Activated CD4-positive, alpha-beta T cell treated with anti-CD3 and anti-CD28 coated beads for 36 hours (primary cell): ENCODE measurements at regions of chr20 and their contacts with region 1.

Region 1: DNA sequence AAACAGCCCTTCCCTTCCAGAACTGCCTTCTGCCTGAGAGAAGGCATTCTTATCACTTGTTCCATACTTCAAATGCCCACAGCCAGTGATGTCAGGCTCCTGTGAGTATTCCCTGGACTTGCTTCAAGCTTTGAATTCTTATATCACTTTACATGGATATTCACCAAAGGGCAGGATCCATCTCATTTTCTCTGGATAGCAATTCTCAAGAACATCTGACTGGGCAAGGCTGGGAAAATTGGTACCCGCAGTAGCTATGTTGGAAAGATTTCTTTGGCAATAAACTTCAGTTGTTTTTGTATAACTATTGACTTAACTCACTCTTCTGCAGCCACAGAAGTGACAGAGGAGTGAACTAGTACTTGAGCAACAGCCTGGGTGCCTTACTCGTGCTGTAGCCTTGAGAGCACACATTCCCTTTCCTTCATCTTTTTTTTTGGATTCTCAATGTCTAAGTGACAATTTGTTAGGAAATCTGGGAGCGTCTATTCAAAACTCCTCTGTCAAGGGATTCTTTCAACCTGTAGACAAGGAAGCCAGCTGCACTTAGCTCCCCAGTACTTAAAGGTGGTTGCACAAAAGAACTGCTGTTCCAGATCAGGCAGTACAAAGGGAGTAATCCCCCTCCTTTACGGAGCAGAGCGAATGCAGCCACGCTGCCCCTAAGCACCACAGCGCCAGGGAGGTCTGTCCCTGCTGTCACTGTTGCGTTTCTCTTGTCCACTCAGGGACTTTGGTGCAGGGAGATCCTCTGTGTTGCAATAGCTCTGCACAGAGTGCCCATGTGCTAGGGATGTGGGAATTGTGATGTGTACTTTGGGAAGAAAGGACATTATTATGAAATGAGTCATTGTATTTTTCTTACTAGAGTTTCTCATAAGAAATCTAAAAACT is 69.6 kb downstream of the JAG1 start:
- DNase-seq: no peak
- ATAC-seq: no peak
- H3K4me3 Mint-ChIP-seq: no peak overlapping the region
- H3K27ac Mint-ChIP-seq: no peak overlapping the region
- H3K4me1 Mint-ChIP-seq: peaks cover 9% of the 10 kb centered on the region
- H3K27me3 Mint-ChIP-seq: no peaks in the 10 kb centered on the region

Region 2: DNA sequence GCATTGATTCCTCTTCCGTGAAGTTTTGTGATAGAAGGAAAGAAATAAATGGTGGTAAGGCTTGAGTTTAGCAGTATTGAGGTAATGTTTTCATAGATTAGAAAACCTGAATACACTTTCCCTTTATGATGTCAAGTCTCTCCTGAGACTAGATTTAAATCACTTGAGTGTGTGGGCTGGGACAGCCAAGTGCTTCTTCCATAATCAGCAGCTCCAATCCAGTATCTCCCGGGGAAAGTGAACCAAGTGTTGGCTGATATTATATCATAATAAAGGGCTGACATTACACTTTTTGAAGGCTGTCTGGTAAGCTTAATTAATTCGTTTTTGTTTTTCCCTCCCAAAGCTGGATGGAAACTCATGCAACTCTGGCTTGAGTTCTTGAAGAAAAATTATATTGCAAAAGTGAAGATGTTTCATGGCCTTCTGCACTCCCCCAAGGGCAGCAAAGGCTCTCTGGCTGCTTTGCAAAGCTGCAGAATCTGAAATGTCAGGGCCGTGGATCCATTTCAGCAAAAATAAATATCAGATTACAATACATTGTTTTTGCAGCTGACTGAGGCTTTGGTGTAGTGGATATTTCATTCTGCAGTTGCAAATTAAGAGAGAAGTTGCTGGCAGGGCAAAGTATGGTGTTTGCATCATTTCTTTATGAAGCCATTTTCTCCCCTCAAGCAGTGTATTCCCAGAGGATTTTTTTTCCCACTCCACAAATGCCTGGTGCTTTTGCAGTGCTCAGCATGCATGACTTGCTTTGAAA is 271.4 kb before region 1 on chr20:
- CTCF ChIA-PET with region 1: no interaction called
- POLR2A ChIA-PET with region 1: no interaction called
- intact Hi-C with region 1: no loop called
- DNase-seq: no peak
- ATAC-seq: no peak
- H3K4me3 Mint-ChIP-seq: no peak overlapping the region
- H3K27ac Mint-ChIP-seq: no peak overlapping the region
- H3K4me1 Mint-ChIP-seq: peaks cover 3% of the 10 kb centered on the region
- H3K27me3 Mint-ChIP-seq: peaks cover 14% of the 10 kb centered on the region

Region 3: DNA sequence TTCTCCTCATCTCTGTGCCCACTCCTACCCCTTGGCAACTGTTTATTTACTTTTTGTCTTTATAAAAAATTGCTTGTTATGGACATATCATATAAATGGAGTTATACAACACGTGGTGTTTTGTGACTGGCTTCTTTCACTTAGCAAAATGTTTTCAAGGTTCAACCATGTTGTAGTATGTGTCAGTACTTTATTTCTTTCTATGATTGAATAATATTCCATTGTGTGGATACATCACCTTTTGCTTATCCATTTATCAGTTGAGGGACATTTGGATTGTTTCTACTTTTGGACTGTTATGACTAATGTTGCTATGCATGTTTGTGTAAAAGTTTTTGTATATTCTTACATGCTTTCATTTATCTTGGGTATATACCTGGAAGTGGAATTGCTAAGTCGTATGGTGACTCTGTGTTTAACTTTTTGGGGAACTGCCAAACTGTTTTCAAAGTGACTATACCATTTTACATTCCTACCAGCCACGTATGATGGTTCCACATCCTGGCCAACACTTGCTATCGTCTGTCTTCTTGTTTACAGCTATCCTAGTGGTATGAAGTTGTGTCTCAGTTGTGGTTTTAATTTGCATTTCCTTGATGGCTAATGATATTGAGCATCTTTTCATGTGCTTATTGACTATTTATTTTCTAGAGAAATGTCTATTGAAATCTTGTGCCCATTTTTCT is 84.7 kb before region 1 on chr20:
- CTCF ChIA-PET with region 1: no interaction called
- POLR2A ChIA-PET with region 1: no interaction called
- intact Hi-C with region 1: no loop called
- DNase-seq: no peak
- ATAC-seq: peak; percentile 63
- H3K4me3 Mint-ChIP-seq: no peak overlapping the region
- H3K27ac Mint-ChIP-seq: no peak overlapping the region
- H3K4me1 Mint-ChIP-seq: peaks cover 28% of the 10 kb centered on the region
- H3K27me3 Mint-ChIP-seq: no peaks in the 10 kb centered on the region

Region 4: GRCh38 chr20:10558635-10559187 is 45.5 kb before region 1 on chr20:
- CTCF ChIA-PET with region 1: interaction called, 3 read pairs
- POLR2A ChIA-PET with region 1: interaction called, 3 read pairs
- intact Hi-C with region 1: loop called (anchors 1 to 2 kb)
- DNase-seq: peak; percentile 75
- ATAC-seq: peak; percentile 99
- H3K4me3 Mint-ChIP-seq: no peak overlapping the region
- H3K27ac Mint-ChIP-seq: no peak overlapping the region
- H3K4me1 Mint-ChIP-seq: peaks cover 22% of the 10 kb centered on the region
- H3K27me3 Mint-ChIP-seq: no peaks in the 10 kb centered on the region

Region 5: DNA sequence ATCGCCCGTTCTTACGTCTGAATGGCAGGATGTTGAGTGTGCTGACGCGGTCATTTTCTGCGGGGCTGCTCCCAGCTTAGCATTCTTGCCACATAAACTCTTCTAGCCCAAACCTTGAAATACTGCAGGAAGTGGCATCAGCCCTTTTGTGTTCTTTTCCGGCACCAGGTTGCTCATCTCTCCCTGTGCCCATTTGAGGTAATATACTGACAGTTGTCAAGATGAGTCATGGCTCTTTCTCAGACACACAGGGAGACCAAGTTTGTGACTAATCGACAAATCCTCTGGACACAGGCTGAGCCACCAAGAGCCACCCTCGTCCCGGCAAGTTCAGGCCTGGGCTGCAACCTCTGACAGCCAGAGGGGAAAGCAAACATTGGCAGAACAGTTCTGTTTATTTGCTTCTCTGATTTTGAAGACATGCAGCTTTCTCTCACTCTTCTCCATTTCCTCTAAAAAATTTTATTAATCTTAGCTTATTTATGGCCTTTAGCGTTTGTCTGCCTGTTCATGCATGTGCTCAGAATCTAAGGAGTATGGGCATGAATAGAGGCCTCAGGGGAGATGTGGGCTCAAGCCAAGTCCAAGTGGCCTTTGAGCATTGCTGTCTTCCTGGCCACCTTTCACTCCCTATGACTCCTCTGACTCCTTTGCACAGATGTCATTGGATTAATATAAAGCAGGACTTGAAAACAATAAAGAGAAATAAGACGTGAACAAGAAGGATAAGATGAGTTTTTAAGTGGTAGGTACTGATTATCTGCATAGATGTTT is 397.7 kb after region 1 on chr20:
- CTCF ChIA-PET with region 1: no interaction called
- POLR2A ChIA-PET with region 1: no interaction called
- intact Hi-C with region 1: no loop called
- DNase-seq: no peak
- ATAC-seq: no peak
- H3K4me3 Mint-ChIP-seq: no peak overlapping the region
- H3K27ac Mint-ChIP-seq: no peak overlapping the region
- H3K4me1 Mint-ChIP-seq: no peaks in the 10 kb centered on the region
- H3K27me3 Mint-ChIP-seq: peaks cover 2% of the 10 kb centered on the region